GM18951 (cell line): ENCODE measurements at regions of chr11 and their contacts with region 1.

Region 1: GRCh38 chr11:6674862-6675261 is 8.3 kb downstream of the MRPL17 start:
- POLR2A ChIP-seq: no peak

Region 2: GRCh38 chr11:6568191-6568918 is 106.5 kb before region 1 on chr11:
- in situ Hi-C with region 1: no loop called
- POLR2A ChIP-seq: no peak

Region 3: GRCh38 chr11:6603287-6604080 is 71.4 kb before region 1 on chr11 and contains the starts of genes ILK and RRP8:
- in situ Hi-C with region 1: loop called (anchors 5 kb)
- POLR2A ChIP-seq: peak; percentile 77